Mucosa of descending colon (tissue), 3 donors: ENCODE measurements at regions of chr2 and their contacts with region 1.

Region 1: GRCh38 chr2:163528640-163529217 is 207.1 kb downstream of the FIGN start:
- DNase-seq: no peak
- ATAC-seq: no peak
- H3K4me3 ChIP-seq: no peak overlapping the region
- H3K4me1 ChIP-seq: no peaks in the 10 kb centered on the region
- CTCF ChIP-seq: no peak

Region 2: DNA sequence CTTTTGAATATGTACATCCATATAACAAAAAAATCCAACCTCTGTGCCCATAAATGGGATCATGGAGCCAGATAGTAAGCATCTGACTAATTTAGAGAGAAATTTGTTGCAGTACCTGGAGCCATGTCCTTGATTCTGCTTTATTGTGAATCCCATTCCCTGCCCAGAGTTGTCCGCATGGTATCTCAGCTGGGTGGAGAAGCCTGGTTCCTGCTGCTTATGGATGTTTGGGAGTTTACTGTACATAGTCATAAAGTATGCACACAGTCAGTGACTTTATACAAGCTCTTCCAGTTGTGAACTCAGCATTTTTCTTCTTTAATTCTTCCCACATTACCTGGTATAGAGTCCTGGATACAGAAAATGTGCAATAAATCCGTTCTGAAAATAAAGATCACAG is 138.9 kb before region 1 on chr2:
- intact Hi-C with region 1: loop called in 1 of 2 experiments (anchors 5 kb)
- DNase-seq: no peak
- ATAC-seq: no peak
- H3K4me3 ChIP-seq: no peak overlapping the region
- H3K4me1 ChIP-seq: no peaks in the 10 kb centered on the region
- CTCF ChIP-seq: no peak